Activated CD8-positive, alpha-beta memory T cell treated with anti-CD3 and anti-CD28 coated beads, Interleukin-2, amount 10 ng/mL, durations not matched to agents 7 days and 5 days (primary cell): ENCODE measurements at regions of chr17 and their contacts with region 1.

Region 1: GRCh38 chr17:38879878-38880682 is 10.2 kb downstream of the LASP1 start:
- DNase-seq: no peak
- ATAC-seq: no peak
- H3K4me3 Mint-ChIP-seq: peak overlapping the region; percentile 34
- H3K27ac Mint-ChIP-seq: peak overlapping the region; percentile 87
- H3K4me1 Mint-ChIP-seq: peaks cover 86% of the 10 kb centered on the region
- H3K27me3 Mint-ChIP-seq: no peaks in the 10 kb centered on the region

Region 2: DNA sequence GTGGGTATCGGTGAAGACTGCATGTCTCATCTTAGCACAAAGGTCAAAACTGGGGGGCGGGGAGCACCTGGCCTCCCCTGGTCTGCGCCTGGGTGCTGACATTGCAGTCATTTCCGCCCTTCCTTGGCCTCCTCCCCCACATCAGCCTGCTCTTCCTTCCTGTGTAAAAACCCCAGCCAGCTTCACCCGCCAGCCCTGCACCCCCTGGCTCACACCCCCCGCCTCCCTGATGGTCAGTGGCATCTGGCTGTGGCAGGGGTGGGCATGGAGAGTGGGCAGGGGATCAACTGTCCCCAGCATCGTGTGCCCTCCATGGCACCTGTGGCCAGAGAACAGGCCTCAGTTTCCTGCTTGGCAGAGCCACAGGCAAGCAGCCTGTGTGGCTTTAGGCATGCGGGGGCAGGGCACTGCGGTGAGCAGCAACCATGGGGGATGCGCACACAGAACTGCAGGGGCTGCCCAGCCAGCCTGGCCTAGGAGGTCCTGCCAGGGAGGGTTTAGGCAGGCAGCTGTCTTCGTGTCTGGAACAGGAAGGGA is 18.8 kb after region 1 on chr17:
- CTCF ChIA-PET with region 1: interaction called, 88 read pairs
- DNase-seq: peak; percentile 94
- ATAC-seq: peak; percentile 73
- H3K4me3 Mint-ChIP-seq: peak overlapping the region; percentile 70
- H3K27ac Mint-ChIP-seq: peak overlapping the region; percentile 98
- H3K4me1 Mint-ChIP-seq: peaks cover 74% of the 10 kb centered on the region
- H3K27me3 Mint-ChIP-seq: no peaks in the 10 kb centered on the region